ENCODE measurements at regions of chr10 and their contacts with region 1.

Region 1: DNA sequence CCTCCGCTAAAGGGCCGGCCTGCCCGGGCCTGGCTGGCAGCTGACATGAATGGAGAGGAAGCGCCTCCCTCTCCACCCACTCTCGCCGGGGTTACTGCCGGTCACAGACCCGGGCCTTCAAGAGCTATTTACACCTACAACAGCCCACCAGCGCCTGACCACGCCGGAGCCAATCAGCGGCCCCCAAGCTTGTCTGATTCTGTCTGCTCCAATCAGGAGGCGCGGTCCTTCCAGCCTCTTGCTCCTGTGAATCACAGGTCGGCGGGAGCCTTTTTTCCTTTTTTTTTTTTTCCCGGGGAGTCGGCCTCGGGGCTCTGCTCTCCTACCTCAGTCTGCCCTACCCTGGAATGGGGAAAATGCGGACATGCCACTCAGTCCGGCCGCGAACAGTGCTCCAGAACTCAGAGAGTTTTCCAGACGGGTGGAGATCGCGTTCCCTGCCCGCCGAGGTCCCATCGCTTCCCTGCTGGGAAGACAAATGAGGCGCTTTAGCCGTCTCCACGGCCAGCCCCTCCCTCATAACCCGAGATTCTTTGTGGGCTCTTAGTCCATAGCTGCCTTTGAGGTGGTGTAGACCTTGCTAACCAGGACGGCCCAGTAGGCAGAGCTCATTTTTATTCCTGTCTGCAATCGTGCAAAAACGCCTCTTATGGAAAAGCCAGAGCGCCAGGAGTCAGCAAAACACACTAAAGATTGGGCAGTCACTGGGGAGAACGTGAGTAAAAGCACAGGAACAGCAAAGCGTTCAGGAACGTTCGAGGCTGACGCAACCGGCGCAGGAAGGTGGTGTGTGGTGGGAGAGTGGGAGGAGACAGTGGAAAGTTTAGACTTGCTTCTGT is 26.5 kb downstream of the SCD start:
- DNase-seq: peak; percentile 88
- ATAC-seq: peak; percentile 87
- H3K4me3 Mint-ChIP-seq: no peak overlapping the region
- H3K27ac Mint-ChIP-seq: no peak overlapping the region
- H3K4me1 Mint-ChIP-seq: peaks cover 35% of the 10 kb centered on the region
- H3K27me3 Mint-ChIP-seq: no peaks in the 10 kb centered on the region

Region 2: GRCh38 chr10:100346765-100347567 is 26.6 kb before region 1 on chr10 and contains the start of gene SCD:
- POLR2A ChIA-PET with region 1: interaction called, 131 read pairs
- DNase-seq: peak; percentile 81
- ATAC-seq: peak; percentile 91
- H3K4me3 Mint-ChIP-seq: peak within 1 kb of the TSS; percentile 100
- H3K27ac Mint-ChIP-seq: peak within 1 kb of the TSS; percentile 75
- H3K4me1 Mint-ChIP-seq: peaks cover 41% of the 10 kb centered on the region
- H3K27me3 Mint-ChIP-seq: no peaks in the 10 kb centered on the region
- total RNA-seq, gene SCD: 212 to 220 TPM

Region 3: DNA sequence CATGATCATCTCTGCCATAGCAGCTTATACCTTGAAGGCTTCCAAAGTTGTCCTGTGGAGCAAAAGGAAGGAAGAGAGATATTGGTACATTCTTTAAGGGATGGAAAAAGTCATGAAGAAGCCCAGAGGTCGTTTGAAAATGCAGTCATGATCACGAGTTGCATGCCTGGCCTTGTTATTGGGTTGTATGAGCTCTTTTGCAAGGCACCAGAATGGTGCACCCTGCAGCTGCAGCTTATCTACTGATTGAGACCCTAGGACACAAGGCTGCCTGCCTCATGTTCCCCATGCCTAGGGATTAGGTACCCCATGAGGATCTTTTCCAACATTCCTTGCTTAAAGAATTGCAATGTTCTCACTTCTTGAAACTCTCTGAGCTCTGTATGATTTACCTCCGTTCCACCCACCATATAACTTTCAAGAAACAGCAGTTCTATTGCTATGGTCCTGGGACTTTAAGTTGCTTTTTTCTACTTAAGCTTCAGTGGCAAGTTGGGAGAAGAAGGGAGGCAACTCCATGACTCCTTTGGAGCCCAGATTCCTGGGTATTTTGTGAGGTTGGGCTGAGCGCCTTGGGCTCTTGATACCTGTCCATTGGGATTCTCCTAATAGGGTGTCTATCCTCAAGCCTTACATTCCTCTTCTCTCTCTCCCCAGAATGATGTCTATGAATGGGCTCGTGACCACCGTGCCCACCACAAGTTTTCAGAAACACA is 19.6 kb before region 1 on chr10:
- POLR2A ChIA-PET with region 1: interaction called, 131 read pairs
- DNase-seq: no peak
- ATAC-seq: no peak
- H3K4me3 Mint-ChIP-seq: peak overlapping the region; percentile 1
- H3K27ac Mint-ChIP-seq: peak overlapping the region; percentile 17
- H3K4me1 Mint-ChIP-seq: peaks cover 62% of the 10 kb centered on the region
- H3K27me3 Mint-ChIP-seq: no peaks in the 10 kb centered on the region

Region 4: DNA sequence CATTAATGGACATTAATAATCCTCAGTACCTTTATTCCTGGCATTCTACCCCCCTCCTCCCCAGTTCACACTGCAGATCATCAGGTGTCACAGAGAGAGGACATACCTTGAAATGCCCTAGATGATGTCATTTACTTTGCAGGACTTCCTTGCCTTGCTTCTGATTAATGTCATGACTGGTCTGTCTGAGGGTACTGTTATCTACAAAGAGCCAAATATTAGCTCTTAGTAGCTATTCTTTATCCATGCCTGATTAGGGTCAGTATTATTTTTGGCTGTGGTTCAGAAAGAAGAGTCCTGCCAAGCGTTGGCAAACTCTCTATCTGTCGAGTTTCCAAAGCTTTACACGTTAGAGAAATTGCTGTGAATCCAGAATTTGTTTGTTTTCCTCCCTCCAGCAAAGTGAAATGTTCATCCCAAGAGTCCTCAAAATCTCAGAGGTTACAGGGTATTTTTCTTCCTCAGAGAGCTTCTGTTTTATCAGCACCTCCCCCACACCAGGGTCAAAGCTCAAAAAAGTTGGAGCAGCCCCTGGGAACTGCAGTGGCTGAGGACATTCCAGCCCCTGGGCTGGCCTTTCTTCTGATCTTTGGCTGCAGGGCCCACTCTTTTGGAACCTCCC is 13.9 kb before region 1 on chr10:
- POLR2A ChIA-PET with region 1: interaction called, 13 read pairs
- DNase-seq: no peak
- ATAC-seq: no peak
- H3K4me3 Mint-ChIP-seq: peak overlapping the region; percentile 41
- H3K27ac Mint-ChIP-seq: peak overlapping the region; percentile 81
- H3K4me1 Mint-ChIP-seq: peaks cover 56% of the 10 kb centered on the region
- H3K27me3 Mint-ChIP-seq: no peaks in the 10 kb centered on the region

Region 5: DNA sequence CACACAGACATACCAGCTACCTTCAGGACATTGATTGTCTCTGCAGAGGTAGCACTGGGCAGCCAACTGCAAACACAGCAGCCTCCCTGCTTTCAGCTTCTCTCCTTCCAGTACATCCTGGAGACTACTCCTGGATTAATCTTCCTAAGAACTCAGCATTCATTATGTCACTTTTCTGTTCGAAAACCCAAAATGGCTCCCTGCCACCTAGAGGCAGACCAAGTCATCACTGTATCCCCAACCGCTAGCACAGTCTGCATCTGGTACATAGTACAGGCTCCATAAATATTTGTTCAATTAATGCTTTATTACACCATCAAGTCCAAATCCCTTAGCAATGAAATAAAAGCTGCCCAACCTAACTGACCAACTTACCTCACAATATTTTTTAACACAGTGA is 151.1 kb after region 1 on chr10:
- POLR2A ChIA-PET with region 1: no interaction called
- DNase-seq: no peak
- ATAC-seq: no peak
- H3K4me3 Mint-ChIP-seq: no peak overlapping the region
- H3K27ac Mint-ChIP-seq: peak overlapping the region; percentile 35
- H3K4me1 Mint-ChIP-seq: peaks cover 21% of the 10 kb centered on the region
- H3K27me3 Mint-ChIP-seq: no peaks in the 10 kb centered on the region

Measured in activated naive CD8-positive, alpha-beta T cell treated with anti-CD3 and anti-CD28 coated beads, Interleukin-2, amount 10 ng/mL, durations not matched to agents 7 days and 5 days (primary cell).